Caco-2 (cell line): ENCODE measurements at regions of chr4 and their contacts with region 1.

Region 1: GRCh38 chr4:973431-974397 is at the start of gene DGKQ:
- DNase-seq: peak; percentile 74 to 84
- H3K4me3 ChIP-seq: peak within 1 kb of the TSS; percentile 70
- H3K4me3 Mint-ChIP-seq: peak within 1 kb of the TSS; percentile 64
- H3K27ac Mint-ChIP-seq: no peak within 1 kb of the TSS
- H3K4me1 ChIP-seq: peaks cover 6% of the 10 kb centered on the region; the same call in 1 of the 2 replicates
- H3K4me1 Mint-ChIP-seq: no peaks in the 10 kb centered on the region
- H3K27me3 ChIP-seq: no peaks in the 10 kb centered on the region
- H3K27me3 Mint-ChIP-seq: no peaks in the 10 kb centered on the region
- CTCF ChIP-seq: no peak
- total RNA-seq, gene DGKQ: 13.9 and 14.1 TPM in 2 replicates

Region 2: DNA sequence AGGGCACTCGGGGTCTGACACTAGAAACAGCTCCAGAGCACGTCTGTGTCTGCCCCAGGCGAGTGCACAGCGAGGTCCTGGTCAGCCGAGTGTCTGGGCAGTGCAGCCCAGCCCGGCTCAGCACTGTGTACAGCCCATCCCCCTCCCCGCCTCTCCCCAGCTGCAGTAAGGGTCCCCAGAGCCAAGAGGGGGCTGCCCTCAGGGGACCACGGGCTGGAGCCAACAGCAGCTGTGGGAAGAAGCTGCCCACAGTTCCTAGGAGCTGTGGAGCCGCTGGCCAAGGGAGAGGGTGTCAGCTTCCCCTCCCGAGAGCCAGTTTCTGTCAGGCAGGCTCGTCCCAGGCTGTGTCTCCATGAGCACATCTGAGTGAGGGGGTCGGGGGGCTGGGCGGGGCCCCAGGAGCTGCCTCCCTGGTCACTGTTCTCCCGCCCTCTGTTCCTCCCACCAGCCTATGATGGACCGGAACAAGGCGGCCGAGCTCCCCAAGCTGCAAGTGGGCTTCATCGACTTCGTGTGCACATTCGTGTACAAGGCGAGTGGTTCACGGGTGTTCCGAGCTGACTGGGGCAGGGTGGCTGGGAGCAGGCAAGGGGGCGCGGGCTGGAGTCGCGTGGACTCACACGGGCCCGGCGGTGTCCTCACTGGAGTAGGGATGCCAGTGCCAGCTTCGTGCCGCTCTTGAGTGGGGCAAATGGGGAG is 307.5 kb before region 1 on chr4:
- CTCF ChIA-PET with region 1: no interaction called
- POLR2A ChIA-PET with region 1: interaction called, 11 read pairs
- intact Hi-C with region 1: no loop called
- DNase-seq: no peak
- H3K4me3 ChIP-seq: no peak overlapping the region
- H3K4me3 Mint-ChIP-seq: no peak overlapping the region
- H3K27ac Mint-ChIP-seq: no peak overlapping the region
- H3K4me1 ChIP-seq: no peaks in the 10 kb centered on the region
- H3K4me1 Mint-ChIP-seq: no peaks in the 10 kb centered on the region
- H3K27me3 ChIP-seq: no peaks in the 10 kb centered on the region
- H3K27me3 Mint-ChIP-seq: no peaks in the 10 kb centered on the region
- CTCF ChIP-seq: no peak

Region 3: DNA sequence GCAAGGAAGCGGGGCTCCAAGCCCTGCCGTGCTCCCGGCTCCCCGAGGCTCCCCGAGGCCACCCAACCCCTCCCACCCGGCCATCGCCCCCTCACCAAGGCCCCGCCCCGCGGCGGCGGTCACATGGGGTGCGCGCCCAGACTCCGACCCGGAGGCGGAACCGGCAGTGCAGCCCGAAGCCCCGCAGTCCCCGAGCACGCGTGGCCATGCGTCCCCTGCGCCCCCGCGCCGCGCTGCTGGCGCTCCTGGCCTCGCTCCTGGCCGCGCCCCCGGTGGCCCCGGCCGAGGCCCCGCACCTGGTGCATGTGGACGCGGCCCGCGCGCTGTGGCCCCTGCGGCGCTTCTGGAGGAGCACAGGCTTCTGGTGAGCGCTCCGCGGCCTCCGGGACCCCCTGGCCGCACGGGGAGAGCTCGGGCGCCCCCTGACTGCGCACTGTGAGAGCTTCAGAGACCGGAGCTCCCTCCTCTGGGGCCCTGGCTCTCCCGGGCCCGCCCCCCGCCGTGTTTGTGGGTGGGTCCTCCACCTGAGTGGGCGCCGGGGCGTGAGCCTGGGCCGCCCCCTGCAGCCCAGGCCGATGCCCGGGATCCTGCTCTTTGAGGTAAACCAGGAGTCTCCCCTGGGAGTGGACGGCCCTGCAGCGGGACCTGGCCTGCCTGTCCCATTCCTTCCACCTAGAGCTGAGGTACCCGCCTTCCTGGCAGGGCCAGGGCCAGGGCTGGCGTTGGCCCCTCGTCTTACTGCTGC is 13.3 kb after region 1 on chr4 and contains the start of gene IDUA:
- CTCF ChIA-PET with region 1: no interaction called
- POLR2A ChIA-PET with region 1: interaction called, 3 read pairs
- intact Hi-C with region 1: loop called (anchors 2 kb)
- DNase-seq: peak; percentile 82 to 86
- H3K4me3 ChIP-seq: peak within 1 kb of the TSS; percentile 79
- H3K4me3 Mint-ChIP-seq: peak within 1 kb of the TSS; percentile 86
- H3K27ac Mint-ChIP-seq: peak within 1 kb of the TSS; percentile 72
- H3K4me1 ChIP-seq: peaks cover 32% of the 10 kb centered on the region
- H3K4me1 Mint-ChIP-seq: no peaks in the 10 kb centered on the region
- H3K27me3 ChIP-seq: no peaks in the 10 kb centered on the region
- H3K27me3 Mint-ChIP-seq: no peaks in the 10 kb centered on the region
- CTCF ChIP-seq: peak; percentile 33 to 69
- total RNA-seq, gene IDUA: 26.4 and 26.9 TPM in 2 replicates

Region 4: DNA sequence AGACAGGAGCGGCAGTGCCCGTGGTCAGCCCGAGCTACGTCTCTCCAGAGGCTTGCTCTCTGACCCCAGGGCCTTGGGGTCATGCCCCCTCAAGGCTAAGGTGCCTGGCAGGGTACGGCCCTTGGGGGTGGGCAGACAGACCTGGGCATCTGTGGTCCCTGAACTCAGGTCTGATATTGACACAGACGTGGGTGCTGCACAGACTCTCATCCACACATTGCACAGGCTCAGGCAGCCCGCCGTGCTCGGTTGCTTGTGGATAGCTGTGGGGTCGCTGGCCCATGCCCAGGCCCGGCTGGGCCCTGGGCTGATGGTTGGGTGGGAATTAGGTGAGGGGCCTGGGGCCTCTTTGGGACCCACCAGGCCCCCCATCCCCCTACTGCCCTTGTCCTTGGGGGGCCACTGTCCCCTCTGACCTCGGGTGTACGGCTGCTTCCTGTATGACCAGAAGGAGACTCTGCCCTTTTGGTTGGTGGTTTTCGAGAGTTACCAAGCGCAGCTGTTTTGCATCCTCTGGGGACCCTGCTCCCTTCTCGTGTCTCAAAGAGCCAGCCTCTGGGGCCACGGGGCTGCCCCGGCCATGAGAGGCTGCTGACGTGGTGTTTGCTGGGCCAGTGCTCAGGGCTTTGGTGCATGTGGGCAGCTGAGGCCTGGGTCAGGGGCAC is 47.8 kb after region 1 on chr4:
- CTCF ChIA-PET with region 1: no interaction called
- POLR2A ChIA-PET with region 1: no interaction called
- intact Hi-C with region 1: no loop called
- DNase-seq: no peak
- H3K4me3 ChIP-seq: no peak overlapping the region
- H3K4me3 Mint-ChIP-seq: no peak overlapping the region
- H3K27ac Mint-ChIP-seq: no peak overlapping the region
- H3K4me1 ChIP-seq: no peaks in the 10 kb centered on the region
- H3K4me1 Mint-ChIP-seq: no peaks in the 10 kb centered on the region
- H3K27me3 ChIP-seq: no peaks in the 10 kb centered on the region
- H3K27me3 Mint-ChIP-seq: no peaks in the 10 kb centered on the region
- CTCF ChIP-seq: no peak